Kidney (tissue), 22 donors: ENCODE measurements at regions of chr21 and their contacts with region 1.

Region 1: GRCh38 chr21:42652527-42653230 is 742 bp upstream of the PDE9A start:
- DNase-seq: peak; percentile 83 to 95 (median 90)
- H3K4me3 ChIP-seq: peak overlapping the region; percentile 41 to 63 (median 45)
- H3K27ac ChIP-seq: peak overlapping the region; percentile 83 to 85
- H3K4me1 ChIP-seq: peaks cover 3 to 34% (median 16%) of the 10 kb centered on the region in 3 donors
- H3K27me3 ChIP-seq: no peaks in the 10 kb centered on the region
- CTCF ChIP-seq: peak; percentile 71

Region 2: GRCh38 chr21:42711667-42712066 is 59.0 kb after region 1 on chr21:
- intact Hi-C with region 1: loop called (anchors 10 kb)
- DNase-seq: peak in 2 of 5 donors; percentile 20 to 35
- H3K4me3 ChIP-seq: no peak overlapping the region
- H3K27ac ChIP-seq: no peak overlapping the region
- H3K4me1 ChIP-seq: no peaks in the 10 kb centered on the region
- H3K27me3 ChIP-seq: no peaks in the 10 kb centered on the region
- CTCF ChIP-seq: no peak